ENCODE measurements at regions of chr14 and their contacts with region 1.

Region 1: GRCh38 chr14:31207755-31208545 is at the start of gene HECTD1:
- DNase-seq: peak; percentile 77
- H3K4me3 Mint-ChIP-seq: peak within 1 kb of the TSS; percentile 89
- H3K27ac Mint-ChIP-seq: peak within 1 kb of the TSS; percentile 95
- H3K4me1 Mint-ChIP-seq: peaks cover 6% of the 10 kb centered on the region
- H3K27me3 Mint-ChIP-seq: no peaks in the 10 kb centered on the region
- CTCF ChIP-seq: peak; percentile 77
- total RNA-seq, gene HECTD1: 122 and 139 TPM in 2 replicates

Region 2: DNA sequence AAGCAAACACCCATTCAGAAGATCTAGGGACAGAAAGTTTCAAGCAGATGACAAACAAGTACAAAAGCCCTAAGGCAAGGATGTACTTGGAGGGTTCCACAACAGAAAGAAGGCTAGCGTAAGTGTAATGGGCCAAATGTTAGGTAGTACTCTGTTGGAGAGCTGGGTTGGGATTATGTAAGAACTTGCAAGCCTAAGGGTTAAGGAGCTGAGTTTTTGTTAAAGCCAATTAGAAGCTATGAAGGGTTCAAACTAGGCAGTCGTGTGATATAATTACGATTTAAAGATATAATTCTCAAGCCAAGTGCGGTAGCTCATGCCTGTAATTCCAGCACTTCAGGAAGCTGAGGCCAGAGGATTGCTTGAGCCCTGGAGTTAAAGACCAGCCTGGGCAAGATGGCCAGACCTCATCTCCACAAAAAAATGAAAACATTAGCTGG is 41.7 kb before region 1 on chr14:
- CTCF ChIA-PET with region 1: interaction called, 4 read pairs
- POLR2A ChIA-PET with region 1: interaction called, 43 read pairs
- intact Hi-C with region 1: no loop called
- DNase-seq: peak; percentile 27
- H3K4me3 Mint-ChIP-seq: peak overlapping the region; percentile 64
- H3K27ac Mint-ChIP-seq: peak overlapping the region; percentile 94
- H3K4me1 Mint-ChIP-seq: peaks cover 16% of the 10 kb centered on the region
- H3K27me3 Mint-ChIP-seq: no peaks in the 10 kb centered on the region
- CTCF ChIP-seq: no peak

Region 3: DNA sequence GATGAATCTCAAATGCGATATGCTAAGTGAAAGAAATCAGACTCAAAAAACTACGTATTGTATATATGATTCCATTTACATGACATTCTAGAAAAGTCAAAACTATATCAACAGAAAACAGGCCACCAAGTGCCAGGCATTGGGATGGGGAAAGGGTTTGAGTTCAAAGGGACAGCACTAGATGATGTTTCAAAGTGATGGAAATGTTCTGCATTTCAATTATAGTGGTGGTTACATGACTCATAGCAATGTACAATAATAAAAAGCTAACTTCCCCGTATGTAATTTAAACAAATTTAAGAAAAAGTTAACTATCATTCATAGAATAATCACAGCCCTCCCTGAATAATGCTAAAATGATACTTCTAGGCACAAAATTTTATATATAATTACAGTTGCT is 13.9 kb before region 1 on chr14:
- CTCF ChIA-PET with region 1: interaction called, 7 read pairs
- POLR2A ChIA-PET with region 1: interaction called, 14 read pairs
- intact Hi-C with region 1: no loop called
- DNase-seq: no peak
- H3K4me3 Mint-ChIP-seq: no peak overlapping the region
- H3K27ac Mint-ChIP-seq: no peak overlapping the region
- H3K4me1 Mint-ChIP-seq: peaks cover 17% of the 10 kb centered on the region
- H3K27me3 Mint-ChIP-seq: no peaks in the 10 kb centered on the region
- CTCF ChIP-seq: no peak

Region 4: DNA sequence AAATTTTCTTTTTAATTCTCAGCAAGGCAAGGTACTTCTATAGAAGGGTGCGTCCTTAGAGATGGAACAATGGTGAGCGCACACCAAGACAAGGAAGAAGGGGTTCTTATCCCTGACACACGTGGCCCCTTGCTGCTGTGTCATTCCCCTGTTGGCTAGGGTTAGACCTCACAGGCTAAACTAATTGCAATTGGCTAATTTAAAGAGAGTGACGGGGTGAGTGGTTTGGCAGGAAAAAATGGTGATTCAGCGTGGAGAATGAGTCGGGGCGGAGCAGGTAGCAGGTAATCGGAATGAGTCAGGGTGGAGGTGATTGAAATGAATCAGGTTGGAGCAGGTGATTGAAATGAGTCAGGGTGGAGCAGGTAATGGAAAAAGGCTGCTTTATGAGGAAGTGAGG is 35.9 kb after region 1 on chr14:
- CTCF ChIA-PET with region 1: interaction called, 3 read pairs
- POLR2A ChIA-PET with region 1: interaction called, 23 read pairs
- intact Hi-C with region 1: no loop called
- DNase-seq: peak; percentile 93
- H3K4me3 Mint-ChIP-seq: peak overlapping the region; percentile 5
- H3K27ac Mint-ChIP-seq: peak overlapping the region; percentile 7
- H3K4me1 Mint-ChIP-seq: peaks cover 20% of the 10 kb centered on the region
- H3K27me3 Mint-ChIP-seq: no peaks in the 10 kb centered on the region
- CTCF ChIP-seq: no peak

Region 5: GRCh38 chr14:31297701-31298344 is 89.9 kb after region 1 on chr14:
- CTCF ChIA-PET with region 1: interaction called, 10 read pairs
- POLR2A ChIA-PET with region 1: interaction called, 9 read pairs
- intact Hi-C with region 1: no loop called
- DNase-seq: peak; percentile 27
- H3K4me3 Mint-ChIP-seq: no peak overlapping the region
- H3K27ac Mint-ChIP-seq: no peak overlapping the region
- H3K4me1 Mint-ChIP-seq: peaks cover 6% of the 10 kb centered on the region
- H3K27me3 Mint-ChIP-seq: no peaks in the 10 kb centered on the region
- CTCF ChIP-seq: no peak

Region 6: GRCh38 chr14:31360919-31361662 is 153.1 kb after region 1 on chr14:
- CTCF ChIA-PET with region 1: interaction called, 5 read pairs
- POLR2A ChIA-PET with region 1: interaction called, 5 read pairs
- intact Hi-C with region 1: loop called (anchors 1 kb)
- DNase-seq: no peak
- H3K4me3 Mint-ChIP-seq: no peak overlapping the region
- H3K27ac Mint-ChIP-seq: no peak overlapping the region
- H3K4me1 Mint-ChIP-seq: peaks cover 6% of the 10 kb centered on the region
- H3K27me3 Mint-ChIP-seq: no peaks in the 10 kb centered on the region
- CTCF ChIP-seq: no peak

Region 7: DNA sequence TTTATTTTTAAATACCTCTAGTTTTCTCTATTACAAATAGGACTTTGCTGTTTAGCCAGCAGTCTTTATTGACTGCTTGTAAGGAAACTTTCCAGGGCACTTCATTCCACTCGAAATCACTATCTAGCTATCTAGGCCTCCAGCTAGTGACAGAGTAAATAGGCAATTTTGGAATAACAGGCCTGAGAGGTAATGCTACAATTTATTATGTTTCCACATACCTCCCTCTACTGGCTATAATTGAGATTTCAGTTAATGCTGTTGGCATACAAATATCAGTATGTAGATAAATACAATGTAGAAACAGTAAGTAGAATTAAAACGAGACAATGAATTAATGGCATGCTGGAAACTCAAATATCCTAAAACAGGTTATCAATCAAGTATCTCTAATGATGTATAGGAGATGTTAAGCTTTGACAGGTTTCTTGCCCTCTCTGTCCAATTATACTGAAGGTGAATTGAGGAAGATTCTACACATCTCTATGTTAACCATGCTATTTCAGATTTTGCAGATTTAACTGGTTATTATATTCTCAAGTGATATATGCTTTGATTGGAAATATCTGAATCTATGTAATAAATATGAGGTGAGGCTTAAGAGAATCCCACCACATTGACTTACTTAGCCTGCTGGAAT is 242.1 kb after region 1 on chr14:
- CTCF ChIA-PET with region 1: no interaction called
- POLR2A ChIA-PET with region 1: no interaction called
- intact Hi-C with region 1: loop called (anchors 2 kb)
- DNase-seq: peak; percentile 46
- H3K4me3 Mint-ChIP-seq: no peak overlapping the region
- H3K27ac Mint-ChIP-seq: no peak overlapping the region
- H3K4me1 Mint-ChIP-seq: peaks cover 4% of the 10 kb centered on the region
- H3K27me3 Mint-ChIP-seq: no peaks in the 10 kb centered on the region
- CTCF ChIP-seq: peak; percentile 46

Region 8: GRCh38 chr14:31561155-31561846 is 353.4 kb after region 1 on chr14 and contains the start of gene NUBPL:
- CTCF ChIA-PET with region 1: no interaction called
- POLR2A ChIA-PET with region 1: no interaction called
- intact Hi-C with region 1: no loop called
- DNase-seq: peak; percentile 91
- H3K4me3 Mint-ChIP-seq: peak within 1 kb of the TSS; percentile 96
- H3K27ac Mint-ChIP-seq: peak within 1 kb of the TSS; percentile 98
- H3K4me1 Mint-ChIP-seq: peaks cover 18% of the 10 kb centered on the region
- H3K27me3 Mint-ChIP-seq: peaks cover 16% of the 10 kb centered on the region
- CTCF ChIP-seq: no peak
- total RNA-seq, gene NUBPL: 12.3 and 13.7 TPM in 2 replicates

Region 9: DNA sequence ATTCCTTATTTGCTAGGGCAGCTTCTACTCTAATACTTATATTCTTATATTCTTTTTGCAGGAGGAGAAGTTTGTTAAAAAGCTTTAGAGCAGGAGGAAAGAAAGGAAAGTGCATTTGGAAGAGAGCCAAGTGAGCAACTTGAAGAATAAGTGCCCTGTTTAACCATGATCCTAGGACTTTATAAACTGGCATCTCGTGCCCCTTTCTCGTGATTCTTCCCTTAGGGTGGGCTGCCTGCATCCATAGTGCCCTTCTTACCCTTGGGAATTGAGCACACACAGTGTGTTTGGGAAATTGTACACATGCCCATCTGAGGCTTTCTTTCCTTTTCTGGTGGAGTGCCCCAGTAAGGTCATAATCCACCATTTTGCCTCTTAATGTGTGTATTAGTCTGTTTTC is 495.1 kb after region 1 on chr14:
- CTCF ChIA-PET with region 1: no interaction called
- POLR2A ChIA-PET with region 1: no interaction called
- intact Hi-C with region 1: no loop called
- DNase-seq: no peak
- H3K4me3 Mint-ChIP-seq: no peak overlapping the region
- H3K27ac Mint-ChIP-seq: no peak overlapping the region
- H3K4me1 Mint-ChIP-seq: no peaks in the 10 kb centered on the region
- H3K27me3 Mint-ChIP-seq: no peaks in the 10 kb centered on the region
- CTCF ChIP-seq: no peak

Measured in MCF 10A (cell line).